Uterus (tissue), 4 donors: ENCODE measurements at regions of chr11 and their contacts with region 1.

Region 1: GRCh38 chr11:57597916-57598830 is 688 bp downstream of the SERPING1 start:
- DNase-seq: peak; percentile 91
- H3K4me3 ChIP-seq: peak overlapping the region; percentile 73 to 84
- H3K27ac ChIP-seq: peak overlapping the region; percentile 99
- H3K4me1 ChIP-seq: peaks cover 0 to 4% of the 10 kb centered on the region in 2 donors
- H3K27me3 ChIP-seq: no peaks in the 10 kb centered on the region
- CTCF ChIP-seq: no peak
- POLR2A ChIP-seq: peak; percentile 31 to 44

Region 2: GRCh38 chr11:57644748-57645688 is 46.8 kb after region 1 on chr11:
- intact Hi-C with region 1: loop called (anchors 10 kb)
- DNase-seq: peak; percentile 81 to 88
- H3K4me3 ChIP-seq: no peak overlapping the region
- H3K27ac ChIP-seq: peak overlapping the region; percentile 56 to 73
- H3K4me1 ChIP-seq: peaks cover 0 to 32% of the 10 kb centered on the region in 2 donors
- H3K27me3 ChIP-seq: no peaks in the 10 kb centered on the region
- CTCF ChIP-seq: peak; percentile 64 to 93 (median 77)
- POLR2A ChIP-seq: no peak

Region 3: GRCh38 chr11:57667117-57667735 is 69.1 kb after region 1 on chr11:
- intact Hi-C with region 1: no loop called
- DNase-seq: peak; percentile 94 to 99
- H3K4me3 ChIP-seq: peak overlapping the region; percentile 73 to 85
- H3K27ac ChIP-seq: peak overlapping the region; percentile 93 to 99
- H3K4me1 ChIP-seq: peaks cover 3 to 6% of the 10 kb centered on the region in 2 donors
- H3K27me3 ChIP-seq: no peaks in the 10 kb centered on the region
- CTCF ChIP-seq: no peak
- POLR2A ChIP-seq: no peak